ENCODE measurements at regions of chr10 and their contacts with region 1.

Region 1: DNA sequence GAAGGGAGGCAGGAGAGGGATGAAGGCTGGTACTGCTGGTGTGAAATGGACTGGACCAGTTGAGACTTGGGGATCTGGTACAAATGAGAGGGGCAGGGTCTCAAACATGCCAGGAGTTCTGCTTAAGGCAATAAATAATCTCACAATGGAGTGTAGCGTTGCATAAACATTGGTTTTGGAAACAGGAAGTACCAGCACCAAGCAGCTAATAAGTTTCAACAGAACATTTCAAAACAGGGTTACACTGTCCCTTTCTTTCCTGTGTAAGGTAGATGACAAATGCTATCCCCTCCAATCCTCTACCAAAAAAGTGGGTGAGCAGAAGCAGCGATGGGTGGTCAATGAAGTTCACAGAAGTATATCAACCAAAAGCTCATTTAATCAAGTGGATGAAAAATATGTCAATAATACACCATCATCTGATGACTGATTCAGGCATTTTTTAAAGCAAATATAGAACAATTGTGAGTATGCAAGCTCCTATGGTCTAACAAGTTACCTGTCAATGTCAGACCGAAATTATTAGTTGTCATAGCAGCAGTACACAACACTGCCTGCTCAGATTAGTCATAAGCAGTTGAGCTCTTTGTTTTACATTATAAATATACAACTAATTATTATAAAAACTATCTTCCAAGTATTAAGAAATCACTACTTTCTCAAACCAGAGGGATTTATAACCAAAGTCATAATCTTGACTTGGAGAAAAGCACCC is 220.0 kb downstream of the FAM107B start:
- DNase-seq: no peak
- H3K4me3 ChIP-seq: no peak overlapping the region
- H3K27ac ChIP-seq: no peak overlapping the region
- H3K27me3 ChIP-seq: no peaks in the 10 kb centered on the region
- CTCF ChIP-seq: no peak

Region 2: DNA sequence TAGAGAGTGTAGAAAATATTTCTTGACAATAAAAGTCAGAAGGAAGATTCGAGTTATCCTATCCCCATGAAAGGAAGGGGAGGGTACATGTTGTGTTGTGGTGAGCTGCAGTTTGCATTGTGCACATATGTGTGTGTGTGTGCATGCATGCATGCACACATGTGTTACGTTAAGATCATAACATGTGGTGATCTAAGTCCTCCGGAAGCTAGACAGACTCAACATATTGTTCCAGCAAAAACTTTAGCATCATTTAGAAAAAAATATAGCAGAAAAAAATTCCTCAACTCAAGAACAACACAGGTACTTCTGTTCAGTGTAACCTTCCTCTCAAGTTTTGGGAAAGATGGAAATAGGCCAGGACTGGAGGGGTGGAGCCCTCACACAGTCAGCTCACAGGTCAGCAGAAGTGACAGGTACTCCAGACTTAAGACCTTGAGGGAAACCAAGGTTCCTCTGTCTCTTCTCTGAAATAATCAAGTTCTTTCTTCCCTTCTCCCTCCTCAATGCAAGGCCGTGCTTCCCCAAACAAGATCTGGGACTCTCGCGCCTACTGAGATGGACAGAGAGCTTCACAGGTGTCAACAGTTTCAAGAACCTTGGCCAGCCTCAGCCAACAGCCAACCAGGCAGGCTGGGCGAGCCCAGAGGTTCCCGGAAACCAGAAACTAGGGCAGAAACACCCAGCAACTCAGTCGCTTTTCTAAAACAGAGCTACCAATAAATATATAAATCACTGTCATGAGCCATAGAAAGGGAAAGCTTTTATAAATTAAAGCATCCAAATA is 14.8 kb after region 1 on chr10:
- CTCF ChIA-PET with region 1: no interaction called
- POLR2A ChIA-PET with region 1: no interaction called
- DNase-seq: no peak
- H3K4me3 ChIP-seq: no peak overlapping the region
- H3K27ac ChIP-seq: no peak overlapping the region
- H3K27me3 ChIP-seq: no peaks in the 10 kb centered on the region
- CTCF ChIP-seq: no peak

Region 3: GRCh38 chr10:15097011-15097812 is 542.6 kb after region 1 on chr10 and contains the start of gene RPP38:
- CTCF ChIA-PET with region 1: no interaction called
- POLR2A ChIA-PET with region 1: interaction called, 11 read pairs
- DNase-seq: peak; percentile 88
- H3K4me3 ChIP-seq: peak within 1 kb of the TSS; percentile 87
- H3K27ac ChIP-seq: peak within 1 kb of the TSS; percentile 97
- H3K27me3 ChIP-seq: peaks cover 4% of the 10 kb centered on the region
- CTCF ChIP-seq: no peak
- polyA plus RNA-seq, gene RPP38: 17.1 and 20.8 TPM in 2 replicates